ENCODE measurements at regions of chr20 and their contacts with region 1.

Region 1: DNA sequence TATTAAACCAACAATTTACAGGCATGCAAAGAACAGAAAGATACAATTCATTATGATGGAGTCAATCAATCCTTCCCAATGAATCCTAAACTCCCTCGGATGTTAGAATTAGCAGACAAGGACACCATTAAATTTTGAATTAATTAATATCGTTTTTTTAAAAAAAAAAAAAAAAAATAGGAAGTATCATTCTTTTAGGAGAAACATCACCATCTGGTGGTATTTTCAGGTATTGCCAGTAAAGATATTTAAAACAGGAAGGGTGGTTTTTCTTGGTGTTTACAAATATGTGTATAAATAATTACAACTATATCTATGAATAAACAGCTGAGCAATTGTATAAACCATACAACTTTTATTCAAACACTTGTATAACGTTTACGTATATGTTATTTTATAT is 564.4 kb downstream of the HAO1 start:
- DNase-seq: no peak
- ATAC-seq: no peak
- H3K4me3 ChIP-seq: no peak overlapping the region
- H3K27ac ChIP-seq: no peak overlapping the region
- H3K4me1 ChIP-seq: no peaks in the 10 kb centered on the region
- H3K27me3 ChIP-seq: no peaks in the 10 kb centered on the region
- CTCF ChIP-seq: peak in 8 of 9 donors; percentile 19 to 53 (median 43)

Region 2: DNA sequence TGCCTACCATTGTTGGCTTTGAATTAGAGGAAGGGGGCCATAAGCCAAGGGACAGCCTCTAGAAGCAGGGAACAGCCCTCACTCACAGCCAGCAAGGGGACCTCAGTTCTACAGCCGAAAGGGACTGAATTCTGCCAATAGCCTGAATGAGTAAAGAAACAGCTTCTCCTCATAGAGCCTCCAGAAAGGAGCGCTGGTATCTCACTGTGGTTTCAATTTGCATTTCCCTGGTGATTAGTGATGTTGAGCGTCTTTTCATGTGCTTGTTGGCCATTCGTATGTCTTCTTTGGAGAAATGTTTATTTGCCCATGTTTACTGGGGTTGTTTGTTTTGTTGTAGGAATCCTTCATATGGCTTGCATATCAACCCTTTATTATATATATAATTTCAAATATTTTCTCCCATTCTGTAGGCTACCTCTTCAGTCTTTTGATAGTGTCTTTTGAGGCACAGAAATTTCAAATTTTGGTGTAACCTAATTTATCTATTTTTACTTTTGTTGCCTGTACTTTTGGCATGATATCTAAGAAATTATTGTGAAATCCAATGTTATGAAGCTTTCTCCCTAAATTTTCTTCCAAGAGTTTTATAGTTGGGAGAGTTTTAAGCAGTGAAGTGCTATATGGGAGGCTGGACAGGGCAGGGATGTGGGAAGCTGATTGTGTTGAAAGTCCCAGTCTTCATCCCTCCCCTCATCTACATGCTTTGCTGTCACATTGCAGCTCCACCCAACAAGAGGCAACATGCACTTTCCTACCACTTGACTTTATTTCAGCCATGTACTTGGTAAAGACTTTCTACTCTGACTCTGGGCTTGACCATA is 1708.0 kb before region 1 on chr20:
- intact Hi-C with region 1: no loop called
- DNase-seq: no peak
- ATAC-seq: no peak
- H3K4me3 ChIP-seq: no peak overlapping the region
- H3K27ac ChIP-seq: no peak overlapping the region
- H3K4me1 ChIP-seq: peaks cover 0 to 2% (median 0%) of the 10 kb centered on the region in 9 donors
- H3K27me3 ChIP-seq: no peaks in the 10 kb centered on the region
- CTCF ChIP-seq: no peak

Region 3: DNA sequence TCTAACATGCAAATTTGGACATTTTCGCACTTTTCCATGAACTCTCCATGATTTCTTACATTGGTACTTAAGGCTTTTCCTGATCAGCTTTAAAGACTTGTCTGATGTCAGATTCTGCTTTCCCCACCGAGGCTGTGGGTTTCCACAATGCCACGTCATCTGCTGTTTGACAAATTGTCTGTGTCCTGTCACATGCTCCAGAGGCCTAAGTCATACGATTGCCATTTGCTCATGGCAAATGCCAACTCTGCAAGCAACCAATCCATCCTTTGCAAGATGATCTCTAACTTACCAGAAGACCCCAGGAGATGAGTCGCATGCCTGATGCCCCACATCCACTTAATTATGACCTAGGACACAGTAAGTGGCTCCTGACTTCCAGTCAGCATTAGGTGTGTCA is 52.0 kb before region 1 on chr20:
- intact Hi-C with region 1: loop called in 1 of 10 experiments (anchors 10 kb)
- DNase-seq: no peak
- ATAC-seq: no peak
- H3K4me3 ChIP-seq: no peak overlapping the region
- H3K27ac ChIP-seq: no peak overlapping the region
- H3K4me1 ChIP-seq: no peaks in the 10 kb centered on the region
- H3K27me3 ChIP-seq: peaks cover 0 to 3% (median 0%) of the 10 kb centered on the region in 7 donors
- CTCF ChIP-seq: no peak

Measured in heart right ventricle (tissue), 16 donors.